ENCODE measurements at regions of chrX and their contacts with region 1.

Region 1: GRCh38 chrX:16786139-16786790 is at the start of gene TXLNG:
- DNase-seq: peak; percentile 99
- H3K4me3 ChIP-seq: peak within 1 kb of the TSS; percentile 61 to 89 (median 81)
- H3K27ac ChIP-seq: peak within 1 kb of the TSS; percentile 76
- H3K4me1 ChIP-seq: peaks cover 4% of the 10 kb centered on the region
- H3K27me3 ChIP-seq: no peaks in the 10 kb centered on the region
- CTCF ChIP-seq: no peak
- POLR2A ChIP-seq: no peak
- total RNA-seq, gene TXLNG: 7.3 and 7.6 TPM in 2 replicates

Region 2: GRCh38 chrX:16528620-16529019 is 257.6 kb before region 1 on chrX:
- CTCF ChIA-PET with region 1: no interaction called
- POLR2A ChIA-PET with region 1: no interaction called
- dilution Hi-C with region 1: no loop called
- intact Hi-C with region 1: no loop called
- DNase-seq: no peak
- H3K4me3 ChIP-seq: no peak overlapping the region
- H3K27ac ChIP-seq: no peak overlapping the region
- H3K4me1 ChIP-seq: no peaks in the 10 kb centered on the region
- H3K27me3 ChIP-seq: no peaks in the 10 kb centered on the region
- CTCF ChIP-seq: no peak
- POLR2A ChIP-seq: no peak

Region 3: DNA sequence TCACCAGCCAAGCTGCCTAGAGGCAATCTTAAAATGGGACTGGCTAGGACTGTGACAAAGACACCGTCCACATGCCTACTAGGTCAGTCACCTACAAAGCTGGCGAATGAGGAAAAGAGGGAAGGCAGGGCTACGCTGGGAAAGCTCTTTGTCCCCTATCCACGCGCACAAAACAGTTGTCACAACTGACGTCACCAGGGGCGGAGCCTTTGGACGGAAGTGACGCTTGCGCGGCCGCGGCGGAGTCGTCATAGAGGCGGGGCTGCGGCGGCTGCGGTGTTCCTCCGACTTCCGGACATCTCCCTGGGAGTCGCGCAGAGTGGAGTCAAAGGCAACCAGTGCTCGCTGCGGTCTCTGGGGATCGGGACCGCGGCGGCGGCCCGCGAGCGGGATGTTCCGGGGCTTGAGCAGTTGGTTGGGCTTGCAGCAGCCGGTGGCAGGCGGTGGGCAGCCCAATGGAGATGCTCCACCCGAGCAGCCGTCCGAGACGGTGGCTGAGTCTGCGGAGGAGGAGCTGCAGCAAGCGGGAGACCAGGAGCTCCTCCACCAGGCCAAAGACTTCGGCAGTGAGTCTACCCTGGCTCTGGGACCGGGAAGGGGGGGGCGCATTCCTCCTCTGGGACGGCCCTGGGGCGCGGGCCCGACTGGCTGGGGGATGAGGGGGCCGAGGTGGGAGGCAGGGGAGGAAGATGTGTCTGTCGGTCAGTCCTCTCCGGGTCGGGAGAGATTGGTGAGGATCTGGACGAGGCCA is 66.8 kb before region 1 on chrX and contains the start of gene SYAP1:
- CTCF ChIA-PET with region 1: no interaction called
- POLR2A ChIA-PET with region 1: interaction called, 5 read pairs
- dilution Hi-C with region 1: no loop called
- intact Hi-C with region 1: loop called (anchors 1 kb)
- DNase-seq: peak; percentile 95
- H3K4me3 ChIP-seq: peak within 1 kb of the TSS; percentile 42 to 72 (median 63)
- H3K27ac ChIP-seq: peak within 1 kb of the TSS; percentile 94
- H3K4me1 ChIP-seq: peaks cover 4% of the 10 kb centered on the region
- H3K27me3 ChIP-seq: no peaks in the 10 kb centered on the region
- CTCF ChIP-seq: no peak
- POLR2A ChIP-seq: peak; percentile 88
- total RNA-seq, gene SYAP1: 21.9 and 22.2 TPM in 2 replicates

Region 4: DNA sequence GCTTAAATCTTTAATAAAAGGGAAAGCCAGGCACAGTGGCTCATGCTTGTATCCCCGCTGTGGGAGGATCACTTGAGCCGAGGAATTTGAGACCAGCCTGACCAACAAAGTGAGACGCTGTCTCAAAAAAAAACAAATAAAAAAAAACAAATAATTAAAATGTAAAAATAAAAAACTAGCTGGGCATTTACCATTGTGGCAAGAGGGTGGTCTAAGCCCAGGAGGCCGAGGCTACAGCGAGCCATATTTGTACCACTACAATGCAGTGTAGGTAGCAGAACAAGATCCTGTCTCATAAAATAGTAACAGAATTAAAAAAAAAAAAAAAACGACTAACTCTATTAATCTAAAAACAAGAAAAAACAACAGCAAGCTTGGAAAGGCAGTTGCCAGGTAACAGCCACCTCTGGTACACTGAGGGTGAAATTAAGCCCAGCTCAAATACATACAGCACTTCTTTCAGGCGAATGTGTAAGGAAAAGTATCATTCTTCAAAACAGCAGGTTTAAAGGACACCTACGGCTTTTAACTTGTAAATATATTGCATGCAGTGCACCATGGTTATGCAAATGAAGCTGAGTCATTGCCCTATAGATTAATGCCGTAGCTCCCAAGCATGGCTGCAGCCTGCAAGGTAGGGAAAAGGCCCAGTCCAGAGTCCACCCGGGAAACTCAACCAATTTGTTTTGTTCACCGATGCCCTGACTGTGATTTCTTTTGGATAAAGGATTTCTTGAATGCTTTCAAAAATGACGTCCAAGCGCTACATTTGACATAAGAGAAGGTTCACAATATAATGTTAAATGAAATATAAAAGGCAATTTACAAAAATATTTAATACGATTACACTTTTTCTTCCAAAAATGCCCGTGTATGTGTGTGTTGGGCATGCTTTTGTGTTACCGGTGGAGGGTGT is 14.5 kb before region 1 on chrX:
- CTCF ChIA-PET with region 1: no interaction called
- POLR2A ChIA-PET with region 1: interaction called, 6 read pairs
- dilution Hi-C with region 1: no loop called
- intact Hi-C with region 1: loop called (anchors 1 kb)
- DNase-seq: peak; percentile 57
- H3K4me3 ChIP-seq: no peak overlapping the region
- H3K27ac ChIP-seq: peak overlapping the region; percentile 90
- H3K4me1 ChIP-seq: no peaks in the 10 kb centered on the region
- H3K27me3 ChIP-seq: no peaks in the 10 kb centered on the region
- CTCF ChIP-seq: no peak
- POLR2A ChIP-seq: peak; percentile 100

Region 5: GRCh38 chrX:16870095-16870860 is 84.0 kb after region 1 on chrX and contains the start of gene RBBP7:
- CTCF ChIA-PET with region 1: no interaction called
- POLR2A ChIA-PET with region 1: no interaction called
- dilution Hi-C with region 1: no loop called
- intact Hi-C with region 1: loop called (anchors 5 kb)
- DNase-seq: peak; percentile 89
- H3K4me3 ChIP-seq: peak within 1 kb of the TSS; percentile 69 to 89 (median 86)
- H3K27ac ChIP-seq: peak within 1 kb of the TSS; percentile 81
- H3K4me1 ChIP-seq: peaks cover 17% of the 10 kb centered on the region
- H3K27me3 ChIP-seq: no peaks in the 10 kb centered on the region
- CTCF ChIP-seq: no peak
- POLR2A ChIP-seq: no peak
- total RNA-seq, gene RBBP7: 129 and 130 TPM in 2 replicates